ENCODE measurements at regions of chr4 and their contacts with region 1.

Region 1: GRCh38 chr4:40228497-40229365 is 31.9 kb downstream of the RHOH start:
- DNase-seq: peak in 1 of 3 donors; percentile 28
- H3K4me3 ChIP-seq: no peak overlapping the region
- H3K27ac ChIP-seq: peak overlapping the region in 1 of 2 experiments; percentile 14
- H3K4me1 ChIP-seq: peaks cover 0 to 30% (median 19%) of the 10 kb centered on the region in 4 experiments
- H3K27me3 ChIP-seq: no peaks in the 10 kb centered on the region

Region 2: GRCh38 chr4:40212674-40213527 is 15.8 kb before region 1 on chr4:
- CTCF ChIA-PET with region 1: interaction called, 10 read pairs
- POLR2A ChIA-PET with region 1: no interaction called
- DNase-seq: no peak
- H3K4me3 ChIP-seq: no peak overlapping the region
- H3K27ac ChIP-seq: no peak overlapping the region
- H3K4me1 ChIP-seq: peaks cover 5 to 27% (median 10%) of the 10 kb centered on the region in 4 experiments
- H3K27me3 ChIP-seq: no peaks in the 10 kb centered on the region

Region 3: GRCh38 chr4:40238700-40239548 is 10.2 kb after region 1 on chr4:
- CTCF ChIA-PET with region 1: interaction called, 13 read pairs
- POLR2A ChIA-PET with region 1: no interaction called
- DNase-seq: peak in 2 of 3 donors; percentile 61 to 71
- H3K4me3 ChIP-seq: peak overlapping the region in 2 of 7 experiments; percentile 21 to 39
- H3K27ac ChIP-seq: peak overlapping the region in 1 of 2 experiments; percentile 89
- H3K4me1 ChIP-seq: peaks cover 13 to 69% (median 57%) of the 10 kb centered on the region in 4 experiments
- H3K27me3 ChIP-seq: no peaks in the 10 kb centered on the region

Region 4: DNA sequence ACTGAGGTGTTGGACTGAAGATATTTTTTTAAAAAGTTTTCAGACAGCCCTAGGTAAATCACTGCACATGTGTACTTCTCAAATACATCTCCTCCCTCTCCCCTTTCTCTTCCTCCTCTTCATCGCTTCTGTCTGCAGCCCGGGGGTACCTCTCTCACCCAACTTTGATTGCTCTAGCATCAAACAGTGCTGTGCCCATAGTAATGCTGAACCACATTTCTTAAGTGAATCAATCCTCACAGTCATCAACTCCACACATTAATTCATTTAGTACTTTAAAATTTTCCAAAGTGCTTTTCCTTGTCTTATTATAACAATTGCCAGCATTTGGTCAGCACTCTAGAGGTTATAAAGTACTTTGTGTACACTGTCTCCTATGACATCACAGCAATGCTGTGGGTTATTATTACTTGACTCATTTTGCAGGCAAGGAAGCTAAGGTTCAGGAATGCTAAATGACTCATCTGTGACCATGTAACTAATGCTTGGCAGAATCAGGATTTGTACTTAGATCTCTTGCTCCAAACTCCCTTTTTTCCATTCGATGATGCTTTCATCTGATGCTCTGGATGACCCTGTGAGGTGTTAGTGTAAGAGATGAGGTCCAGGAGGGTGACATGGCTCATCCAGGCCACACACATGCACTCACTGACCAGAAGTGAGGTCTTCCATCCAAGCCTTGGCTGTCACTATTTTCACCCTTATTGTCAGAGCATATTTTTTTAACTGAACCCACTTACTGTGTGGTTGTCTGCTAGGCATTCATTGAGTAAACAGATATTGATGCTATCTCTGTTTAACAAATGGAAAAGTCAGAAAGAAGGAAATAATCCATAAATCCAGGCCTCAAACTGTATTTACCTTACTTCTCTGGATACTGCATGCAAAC is 26.9 kb after region 1 on chr4:
- CTCF ChIA-PET with region 1: no interaction called
- POLR2A ChIA-PET with region 1: no interaction called
- DNase-seq: peak in 2 of 3 donors; percentile 29 to 53
- H3K4me3 ChIP-seq: no peak overlapping the region
- H3K27ac ChIP-seq: no peak overlapping the region
- H3K4me1 ChIP-seq: peaks cover 0 to 23% (median 12%) of the 10 kb centered on the region in 4 experiments
- H3K27me3 ChIP-seq: no peaks in the 10 kb centered on the region

Measured in common myeloid progenitor, CD34-positive (primary cell).